Activated naive CD4-positive, alpha-beta T cell treated with anti-CD3 and anti-CD28 coated beads for 36 hours (primary cell): ENCODE measurements at regions of chr5 and their contacts with region 1.

Region 1: DNA sequence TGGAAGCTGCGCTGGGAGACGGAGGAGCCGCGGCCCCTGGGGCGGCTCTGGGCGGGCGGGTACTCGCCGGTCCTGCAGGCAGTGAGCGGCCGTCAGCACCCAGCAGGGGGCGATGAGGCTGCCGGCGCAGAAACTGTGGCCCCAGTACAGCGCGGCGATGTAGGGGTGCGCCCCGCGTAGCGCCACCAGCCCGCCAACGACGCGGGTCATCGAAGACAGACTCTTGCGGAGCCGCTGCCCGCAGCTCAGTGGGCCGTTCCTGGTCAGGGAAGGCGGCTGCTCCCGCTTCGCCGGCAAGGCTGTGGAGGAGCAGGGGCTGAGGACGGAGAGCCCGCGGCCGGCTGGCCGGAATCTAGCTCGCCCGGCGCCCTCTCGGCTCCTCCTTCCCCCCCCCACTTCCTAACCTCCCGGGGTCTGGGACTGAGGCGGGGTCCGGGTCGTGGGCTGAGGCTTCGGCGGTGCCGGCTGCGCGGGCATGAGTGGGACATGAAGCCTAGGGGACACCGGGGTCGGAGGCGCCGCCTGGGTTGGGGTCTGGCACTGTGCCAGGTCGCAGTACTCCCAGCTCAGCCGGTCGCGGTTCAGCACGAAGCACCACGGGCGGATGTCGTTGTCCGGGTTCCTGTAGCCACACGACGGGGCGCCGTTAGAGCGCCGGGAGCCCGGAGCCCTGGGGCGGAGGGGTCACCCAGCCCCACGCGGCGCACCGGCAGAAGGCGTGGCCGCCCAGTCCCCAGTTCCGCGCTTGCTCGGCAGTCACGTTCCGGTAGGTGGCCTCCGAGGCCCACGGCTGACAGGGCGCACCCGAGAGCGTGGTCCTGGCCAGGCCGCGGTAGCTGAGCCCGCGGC is 3.6 kb upstream of the PFN3 start:
- DNase-seq: peak; percentile 90
- H3K4me3 Mint-ChIP-seq: peak overlapping the region; percentile 78
- H3K27ac Mint-ChIP-seq: no peak overlapping the region
- H3K4me1 Mint-ChIP-seq: peaks cover 19% of the 10 kb centered on the region
- H3K27me3 Mint-ChIP-seq: peaks cover 15% of the 10 kb centered on the region

Region 2: DNA sequence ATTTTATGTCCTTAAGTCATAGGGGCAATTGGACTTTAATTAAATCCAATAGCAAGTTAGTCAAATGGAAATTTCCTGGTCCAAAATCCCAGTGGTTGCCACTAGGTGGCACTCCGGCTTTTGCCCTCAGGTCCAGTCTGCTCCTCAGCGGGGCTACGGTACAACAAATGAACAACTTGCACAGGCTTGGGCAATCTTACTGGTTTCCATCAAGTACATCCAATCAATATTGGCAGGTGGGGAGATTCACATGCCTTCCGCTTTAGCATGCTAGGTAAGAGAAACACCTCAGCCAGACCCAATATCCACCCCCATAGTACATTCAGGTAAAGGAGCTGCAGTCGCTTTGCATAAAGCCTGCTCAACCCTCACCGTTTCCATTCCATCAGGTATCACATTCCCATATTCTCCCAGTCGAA is 86.0 kb before region 1 on chr5:
- CTCF ChIA-PET with region 1: interaction called, 42 read pairs
- intact Hi-C with region 1: loop called (anchors 1 kb)
- DNase-seq: peak; percentile 90
- H3K4me3 Mint-ChIP-seq: no peak overlapping the region
- H3K27ac Mint-ChIP-seq: no peak overlapping the region
- H3K4me1 Mint-ChIP-seq: peaks cover 19% of the 10 kb centered on the region
- H3K27me3 Mint-ChIP-seq: no peaks in the 10 kb centered on the region

Region 3: GRCh38 chr5:177382423-177383029 is 21.5 kb before region 1 on chr5:
- CTCF ChIA-PET with region 1: interaction called, 25 read pairs
- intact Hi-C with region 1: no loop called
- DNase-seq: peak; percentile 71
- H3K4me3 Mint-ChIP-seq: no peak overlapping the region
- H3K27ac Mint-ChIP-seq: no peak overlapping the region
- H3K4me1 Mint-ChIP-seq: peaks cover 35% of the 10 kb centered on the region
- H3K27me3 Mint-ChIP-seq: no peaks in the 10 kb centered on the region

Region 4: DNA sequence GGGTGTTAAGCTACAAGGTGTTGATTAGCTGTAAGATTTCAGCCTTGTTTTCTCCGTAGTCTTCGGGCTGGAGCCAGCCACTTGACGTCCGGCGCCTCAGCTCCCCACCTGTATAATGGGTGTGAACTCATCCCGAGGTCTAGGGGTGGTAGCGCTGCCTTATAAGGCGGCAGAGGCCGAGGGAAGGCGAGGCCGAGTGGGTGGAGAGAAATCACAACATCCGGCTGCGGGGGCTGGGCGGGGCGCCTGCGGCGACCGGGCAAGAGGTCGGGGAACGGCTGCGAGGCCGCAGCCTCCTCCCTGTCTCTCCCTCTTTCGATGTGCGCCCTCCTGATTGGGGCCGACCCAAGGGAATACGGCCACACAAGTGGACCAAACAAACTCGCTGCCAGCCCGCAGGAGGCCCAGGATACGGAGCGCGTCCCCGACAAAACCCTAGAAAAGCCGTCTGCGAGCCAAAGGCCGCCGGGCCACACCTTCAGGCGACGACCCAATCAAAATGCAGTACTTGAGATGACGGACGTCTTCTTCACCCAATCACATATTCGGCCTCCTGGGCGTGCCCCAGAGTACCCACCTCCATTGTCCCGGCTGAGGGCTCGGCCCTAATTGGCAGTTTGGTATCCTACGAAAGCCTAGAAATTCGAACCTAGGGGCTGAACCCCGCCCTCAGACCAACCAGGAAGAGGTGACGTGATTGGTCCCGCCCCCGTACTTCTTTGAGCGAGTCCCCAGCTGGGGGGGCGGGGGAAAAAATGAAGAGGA is 22.0 kb after region 1 on chr5:
- CTCF ChIA-PET with region 1: interaction called, 111 read pairs
- intact Hi-C with region 1: loop called (anchors 1 kb)
- DNase-seq: peak; percentile 100
- H3K4me3 Mint-ChIP-seq: peak overlapping the region; percentile 88
- H3K27ac Mint-ChIP-seq: peak overlapping the region; percentile 95
- H3K4me1 Mint-ChIP-seq: peaks cover 33% of the 10 kb centered on the region
- H3K27me3 Mint-ChIP-seq: no peaks in the 10 kb centered on the region

Region 5: DNA sequence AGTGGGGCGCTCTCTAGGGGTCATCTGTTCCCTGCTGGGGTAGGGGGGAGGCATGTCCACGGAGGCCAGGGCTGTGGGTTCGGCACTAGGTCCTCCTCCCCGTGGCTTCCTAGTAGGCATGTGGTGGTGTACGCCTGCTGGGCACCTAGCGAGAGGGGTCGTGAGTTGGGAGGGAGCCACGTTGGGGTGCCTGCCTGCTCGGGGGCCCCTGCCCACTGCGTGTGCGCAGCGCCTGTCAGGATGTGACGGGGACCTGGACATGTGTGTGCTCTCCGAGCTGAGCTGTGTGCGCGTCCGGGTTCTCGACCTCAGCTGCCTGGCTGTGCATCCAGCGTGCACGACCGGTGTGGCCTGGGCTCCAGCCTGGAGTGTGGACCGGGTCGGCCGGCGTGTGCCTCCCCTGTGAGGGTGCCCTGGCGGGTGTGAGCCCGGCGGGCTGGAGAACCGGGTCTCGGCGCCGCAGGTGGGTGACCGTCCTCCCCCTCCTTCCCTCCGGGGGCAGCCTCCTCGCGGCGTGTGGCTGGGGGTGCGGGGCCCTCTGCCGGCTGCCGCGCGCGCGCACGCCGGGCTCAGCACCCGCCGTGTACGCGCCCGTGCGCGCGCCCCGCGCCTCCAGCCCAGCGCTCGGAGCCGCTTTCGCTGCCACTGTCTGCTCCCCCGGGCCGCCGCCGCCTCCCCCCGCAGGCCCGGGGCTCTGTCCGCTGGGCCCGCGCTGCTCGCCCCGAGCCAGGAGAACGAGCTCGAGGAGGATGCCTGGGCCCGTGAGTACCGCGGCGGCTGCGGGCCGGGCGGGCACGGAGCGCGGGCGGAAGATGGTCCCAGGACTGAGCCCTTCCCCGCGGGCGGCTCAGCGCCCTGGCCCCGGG is 42.4 kb after region 1 on chr5 and contains the start of gene PRR7:
- CTCF ChIA-PET with region 1: interaction called, 161 read pairs
- intact Hi-C with region 1: loop called (anchors 2 kb)
- DNase-seq: peak; percentile 65
- H3K4me3 Mint-ChIP-seq: peak within 1 kb of the TSS; percentile 77
- H3K27ac Mint-ChIP-seq: peak within 1 kb of the TSS; percentile 92
- H3K4me1 Mint-ChIP-seq: peaks cover 45% of the 10 kb centered on the region
- H3K27me3 Mint-ChIP-seq: no peaks in the 10 kb centered on the region
- total RNA-seq, gene PRR7: 7.4 to 8.2 TPM

Region 6: GRCh38 chr5:178622679-178623247 is 1218.7 kb after region 1 on chr5:
- CTCF ChIA-PET with region 1: no interaction called
- intact Hi-C with region 1: no loop called
- DNase-seq: no peak
- H3K4me3 Mint-ChIP-seq: no peak overlapping the region
- H3K27ac Mint-ChIP-seq: no peak overlapping the region
- H3K4me1 Mint-ChIP-seq: peaks cover 55% of the 10 kb centered on the region
- H3K27me3 Mint-ChIP-seq: no peaks in the 10 kb centered on the region